ENCODE measurements at regions of chr17 and their contacts with region 1.

Region 1: GRCh38 chr17:7825206-7825990 is 8.6 kb upstream of the KDM6B start:
- DNase-seq: no peak
- ATAC-seq: peak; percentile 54 to 81 (median 66)
- H3K4me3 ChIP-seq: no peak overlapping the region
- H3K27ac ChIP-seq: no peak overlapping the region
- H3K4me1 ChIP-seq: no peaks in the 10 kb centered on the region
- H3K27me3 ChIP-seq: no peaks in the 10 kb centered on the region
- CTCF ChIP-seq: peak; percentile 30

Region 2: DNA sequence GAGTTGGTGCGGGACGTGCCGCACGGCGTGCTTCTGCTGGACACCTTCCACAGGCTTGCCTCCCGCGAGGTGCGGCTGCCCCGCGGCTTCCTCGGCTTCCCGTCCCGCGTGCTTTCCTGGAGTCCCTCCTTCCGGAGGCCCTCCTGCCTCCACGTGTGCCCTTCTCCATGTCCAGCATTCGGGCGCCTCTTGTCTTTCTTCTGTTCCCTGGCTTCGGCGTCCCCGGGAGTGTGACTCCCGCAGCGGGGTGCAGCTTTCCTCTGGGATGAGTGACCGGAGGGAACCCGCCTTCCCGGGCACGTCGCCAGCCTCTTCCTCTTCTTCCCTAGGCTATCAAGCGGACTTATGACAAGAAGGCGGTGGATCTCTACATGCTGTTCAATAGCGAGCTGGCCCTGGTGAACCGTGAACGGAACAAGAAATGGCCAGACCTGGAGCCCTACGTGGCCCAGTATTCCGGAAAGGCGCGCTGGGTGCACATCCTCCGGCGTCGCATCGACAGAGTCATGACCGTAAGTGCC is 84.9 kb before region 1 on chr17:
- intact Hi-C with region 1: loop called in 1 of 2 experiments (anchors 5 kb)
- DNase-seq: peak in 1 of 2 donors; percentile 57
- ATAC-seq: no peak
- H3K4me3 ChIP-seq: peak overlapping the region; percentile 42
- H3K27ac ChIP-seq: no peak overlapping the region
- H3K4me1 ChIP-seq: no peaks in the 10 kb centered on the region
- H3K27me3 ChIP-seq: peaks cover 0 to 31% (median 0%) of the 10 kb centered on the region in 3 donors
- CTCF ChIP-seq: no peak

Region 3: DNA sequence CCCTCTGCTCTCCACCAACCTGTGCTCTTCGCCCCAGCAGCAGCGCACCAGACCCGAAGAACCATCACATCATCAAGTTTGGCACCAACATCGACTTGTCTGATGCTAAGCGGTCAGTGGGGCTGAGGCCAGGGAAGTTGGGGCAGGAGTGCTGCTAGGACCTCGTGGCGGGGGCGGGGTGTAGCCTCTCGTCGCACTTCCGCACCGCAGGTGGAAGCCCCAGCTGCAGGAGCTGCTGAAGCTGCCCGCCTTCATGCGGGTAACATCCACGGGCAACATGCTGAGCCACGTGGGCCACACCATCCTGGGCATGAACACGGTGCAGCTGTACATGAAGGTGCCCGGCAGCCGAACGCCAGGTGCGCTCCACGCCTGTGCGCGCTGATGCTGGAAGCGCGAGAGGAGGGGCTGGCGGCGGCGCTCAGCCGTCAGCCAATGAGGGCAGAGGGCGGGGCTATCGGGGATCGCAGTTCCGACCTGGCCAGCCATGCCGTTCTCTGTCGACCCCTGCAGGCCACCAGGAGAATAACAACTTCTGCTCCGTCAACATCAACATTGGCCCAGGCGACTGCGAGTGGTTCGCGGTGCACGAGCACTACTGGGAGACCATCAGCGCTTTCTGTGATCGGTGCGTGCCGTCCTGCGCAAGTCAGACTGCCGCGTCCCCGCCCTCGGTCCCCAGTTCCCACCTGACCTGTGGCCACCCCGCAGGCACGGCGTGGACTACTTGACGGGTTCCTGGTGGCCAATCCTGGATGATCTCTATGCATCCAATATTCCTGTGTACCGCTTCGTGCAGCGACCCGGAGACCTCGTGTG is 26.2 kb after region 1 on chr17:
- intact Hi-C with region 1: loop called (anchors 2 kb)
- DNase-seq: peak; percentile 90 to 96
- ATAC-seq: peak; percentile 80 to 86 (median 86)
- H3K4me3 ChIP-seq: peak overlapping the region; percentile 22
- H3K27ac ChIP-seq: peak overlapping the region; percentile 23
- H3K4me1 ChIP-seq: peaks cover 19% of the 10 kb centered on the region
- H3K27me3 ChIP-seq: no peaks in the 10 kb centered on the region
- CTCF ChIP-seq: peak; percentile 99

Region 4: DNA sequence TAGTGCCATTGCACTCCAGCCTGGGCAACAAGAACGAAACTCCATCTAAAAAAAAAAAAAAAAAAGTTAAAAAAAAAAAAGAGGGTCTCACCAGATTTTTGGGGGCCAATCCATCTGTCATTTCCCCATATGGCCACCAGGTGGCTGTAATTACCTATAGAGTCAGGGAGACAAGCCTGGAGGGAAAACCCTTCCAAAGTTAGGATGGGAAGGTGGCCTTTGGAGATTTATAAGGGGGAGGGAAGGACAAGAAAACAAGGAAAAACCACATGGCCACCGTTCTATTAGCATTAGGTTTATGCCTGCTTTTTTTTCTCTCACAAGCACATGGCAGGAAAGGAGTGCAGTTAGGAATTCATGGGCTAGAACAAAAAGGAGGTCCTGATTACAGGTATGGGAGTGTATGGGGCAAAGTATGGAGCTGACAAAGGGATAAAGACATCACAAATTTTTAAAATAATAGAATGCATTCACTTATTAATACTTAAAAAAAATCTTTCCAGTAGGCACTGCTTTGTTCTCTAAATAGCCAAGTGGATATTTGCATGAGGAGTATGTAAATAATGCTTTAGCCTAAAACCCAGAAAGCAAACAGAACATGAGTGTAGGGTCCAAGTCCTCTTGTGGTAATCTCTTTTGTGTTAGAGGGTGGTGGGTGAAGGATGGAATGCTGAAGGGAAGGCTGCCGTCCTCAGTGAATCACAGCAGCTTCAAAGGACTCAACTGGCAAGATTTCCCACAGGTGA is 37.5 kb after region 1 on chr17:
- intact Hi-C with region 1: loop called in 1 of 2 experiments (anchors 5 kb)
- DNase-seq: no peak
- ATAC-seq: no peak
- H3K4me3 ChIP-seq: no peak overlapping the region
- H3K27ac ChIP-seq: no peak overlapping the region
- H3K4me1 ChIP-seq: peaks cover 12% of the 10 kb centered on the region
- H3K27me3 ChIP-seq: no peaks in the 10 kb centered on the region
- CTCF ChIP-seq: peak; percentile 82

Region 5: DNA sequence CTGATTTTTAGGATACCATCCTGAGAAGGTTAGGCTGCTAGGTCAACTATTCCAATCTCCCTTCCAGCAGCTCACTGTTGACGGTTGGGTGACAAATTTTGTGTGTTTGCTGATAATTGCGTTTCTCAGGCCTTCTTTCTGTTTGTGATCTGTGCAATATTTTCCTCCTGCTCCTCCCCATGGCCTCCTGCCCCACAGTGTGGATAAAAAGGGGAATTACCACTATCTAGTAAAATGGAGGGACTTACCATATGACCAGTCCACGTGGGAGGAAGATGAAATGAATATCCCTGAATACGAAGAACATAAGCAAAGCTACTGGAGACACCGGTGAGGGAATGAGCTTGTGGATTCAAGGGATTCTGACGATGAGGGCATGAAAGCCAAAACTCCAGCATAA is 72.4 kb after region 1 on chr17:
- intact Hi-C with region 1: loop called in 1 of 2 experiments (anchors 5 kb)
- DNase-seq: no peak
- ATAC-seq: peak; percentile 68 to 80 (median 76)
- H3K4me3 ChIP-seq: no peak overlapping the region
- H3K27ac ChIP-seq: no peak overlapping the region
- H3K4me1 ChIP-seq: peaks cover 2% of the 10 kb centered on the region
- H3K27me3 ChIP-seq: no peaks in the 10 kb centered on the region
- CTCF ChIP-seq: peak; percentile 50